ENCODE measurements at regions of chr2 and their contacts with region 1.

Region 1: DNA sequence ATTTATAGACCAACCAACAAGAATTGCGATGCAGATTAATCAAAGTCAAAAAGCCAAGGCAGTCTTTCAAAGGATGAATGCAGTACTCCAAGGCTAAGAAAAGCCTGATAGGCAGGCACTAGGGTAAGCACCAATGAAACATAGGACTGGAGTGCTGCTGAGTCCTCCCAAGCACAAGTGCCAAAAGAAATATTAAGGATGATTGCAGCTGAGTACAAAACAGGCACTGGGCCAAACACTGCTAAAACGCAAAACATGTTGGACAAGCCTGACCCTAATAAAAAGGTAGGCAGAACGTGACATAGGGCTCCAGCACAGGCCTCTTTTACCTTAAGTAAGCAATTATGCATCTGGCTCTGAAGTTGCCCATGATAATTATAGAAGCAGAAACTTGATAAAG is 160.1 kb upstream of the LRP1B start:
- DNase-seq: peak; percentile 56
- H3K4me3 ChIP-seq: no peak overlapping the region
- H3K27ac ChIP-seq: peak overlapping the region; percentile 7
- H3K4me1 ChIP-seq: peaks cover 10% of the 10 kb centered on the region
- H3K27me3 ChIP-seq: no peaks in the 10 kb centered on the region
- CTCF ChIP-seq: no peak

Region 2: GRCh38 chr2:142175813-142176338 is 115.1 kb before region 1 on chr2:
- CTCF ChIA-PET with region 1: no interaction called
- dilution Hi-C with region 1: no loop called
- in situ Hi-C with region 1: no loop called
- intact Hi-C with region 1: no loop called
- DNase-seq: no peak
- H3K4me3 ChIP-seq: no peak overlapping the region
- H3K27ac ChIP-seq: no peak overlapping the region
- H3K4me1 ChIP-seq: no peaks in the 10 kb centered on the region
- H3K27me3 ChIP-seq: no peaks in the 10 kb centered on the region
- CTCF ChIP-seq: no peak

Region 3: DNA sequence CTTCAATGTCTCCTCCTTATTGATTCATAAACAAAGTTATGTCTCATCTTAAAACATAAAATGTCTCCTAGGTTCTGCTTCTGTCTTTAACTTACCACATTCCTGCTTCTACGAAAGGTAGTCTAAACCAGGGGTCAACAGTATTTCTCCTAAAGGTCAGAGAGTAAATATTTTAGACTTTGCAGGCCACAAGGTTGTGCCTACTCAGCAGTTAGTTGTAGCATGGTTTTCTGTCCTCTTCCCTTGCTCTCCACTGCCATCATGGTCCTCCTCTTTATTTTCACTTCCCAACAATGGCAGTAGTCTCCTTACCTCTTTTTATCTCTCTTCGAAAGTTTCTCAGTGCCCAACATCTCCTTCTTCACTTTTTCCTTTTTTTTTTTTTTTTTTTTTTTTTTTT is 91.9 kb before region 1 on chr2:
- CTCF ChIA-PET with region 1: no interaction called
- dilution Hi-C with region 1: loop called (anchors 5 kb)
- in situ Hi-C with region 1: no loop called
- intact Hi-C with region 1: no loop called
- DNase-seq: no peak
- H3K4me3 ChIP-seq: no peak overlapping the region
- H3K27ac ChIP-seq: no peak overlapping the region
- H3K4me1 ChIP-seq: no peaks in the 10 kb centered on the region
- H3K27me3 ChIP-seq: no peaks in the 10 kb centered on the region
- CTCF ChIP-seq: no peak

Measured in mammary epithelial cell (primary cell).